Posterior vena cava (tissue), 2 donors: ENCODE measurements at regions of chr14 and their contacts with region 1.

Region 1: GRCh38 chr14:45083971-45084722 is at the start of gene PRPF39:
- DNase-seq: peak; percentile 98
- total RNA-seq, gene PRPF39: 30.4 to 31.8 TPM

Region 2: GRCh38 chr14:43282457-43282856 is 1801.7 kb before region 1 on chr14:
- intact Hi-C with region 1: no loop called
- DNase-seq: no peak

Region 3: DNA sequence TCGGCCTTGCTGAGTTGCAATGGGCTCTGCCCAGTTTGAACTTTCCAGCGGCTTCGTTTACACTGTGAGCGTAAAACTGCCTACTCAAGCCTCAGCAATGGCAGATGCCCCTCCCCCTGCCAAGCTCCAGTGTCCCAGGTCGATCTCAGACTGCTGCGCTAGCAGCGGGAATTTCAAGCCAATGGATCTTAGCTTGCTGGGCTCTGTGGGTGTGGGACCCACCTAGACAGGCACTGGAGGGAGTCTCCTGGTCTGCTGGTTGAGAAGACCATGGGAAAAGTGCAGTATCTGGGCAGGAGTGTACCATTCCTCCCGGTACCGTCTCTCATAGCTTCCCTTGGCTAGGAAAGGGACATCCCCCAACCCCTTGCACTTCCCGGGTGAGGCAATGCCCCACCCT is 210.6 kb before region 1 on chr14:
- intact Hi-C with region 1: no loop called
- DNase-seq: no peak

Region 4: GRCh38 chr14:45103806-45104205 is 19.7 kb after region 1 on chr14:
- intact Hi-C with region 1: no loop called
- DNase-seq: no peak

Region 5: DNA sequence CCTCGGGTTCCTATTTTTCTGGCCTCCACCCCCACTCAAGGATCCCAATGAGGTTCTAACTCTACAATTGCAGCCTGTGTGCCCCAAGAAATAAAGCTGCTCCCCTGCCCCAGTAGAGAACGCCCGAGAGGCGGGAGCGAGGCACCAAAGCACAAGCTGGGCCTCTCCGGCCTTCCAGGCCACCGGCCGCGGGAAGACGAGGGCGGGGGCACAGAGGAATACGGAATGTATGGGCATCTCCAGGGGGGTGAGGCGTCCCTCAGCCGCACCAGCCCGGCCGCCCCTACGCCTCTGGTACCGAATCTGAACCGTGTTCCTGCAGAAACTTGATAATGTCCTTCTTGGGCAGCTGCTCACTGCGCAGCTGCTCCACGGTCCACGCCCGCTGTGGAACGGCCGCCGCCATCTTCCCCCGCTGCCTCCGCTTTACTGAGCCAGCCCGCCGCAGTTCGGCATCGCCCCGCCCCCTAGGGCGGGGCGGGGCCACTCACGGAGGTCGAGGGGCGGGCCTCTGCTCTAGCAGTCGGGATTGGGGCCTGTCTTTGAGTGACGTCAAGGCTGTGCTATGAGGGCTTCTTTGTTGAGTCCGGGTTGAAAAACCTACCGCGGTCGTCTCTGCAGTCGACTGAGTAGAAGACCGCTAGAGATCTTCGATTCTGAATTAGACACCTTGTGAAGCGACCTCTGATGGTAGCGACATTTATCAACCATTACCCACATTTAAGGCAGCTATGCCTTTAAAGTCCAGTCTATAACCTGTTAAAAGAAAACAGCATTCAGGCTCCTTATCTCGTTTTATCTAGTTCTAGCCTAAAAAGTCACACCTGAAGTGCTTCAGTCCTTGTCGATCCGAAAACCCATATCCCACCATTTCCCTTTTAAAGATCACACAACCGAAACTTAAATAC is 50.2 kb after region 1 on chr14 and contains the start of gene FKBP3:
- intact Hi-C with region 1: loop called in 1 of 2 experiments (anchors 10 kb)
- DNase-seq: peak; percentile 98
- total RNA-seq, gene FKBP3: 42.8 to 45.7 TPM